Upper lobe of right lung (tissue), 1 donor: ENCODE measurements at regions of chr1 and their contacts with region 1.

Region 1: GRCh38 chr1:31669786-31670592 is 25.3 kb upstream of the PEF1 start:
- DNase-seq: peak; percentile 91
- ATAC-seq: peak; percentile 63
- H3K4me3 ChIP-seq: peak overlapping the region; percentile 16
- H3K27ac ChIP-seq: peak overlapping the region; percentile 47
- H3K4me1 ChIP-seq: peaks cover 11% of the 10 kb centered on the region
- H3K27me3 ChIP-seq: no peaks in the 10 kb centered on the region
- CTCF ChIP-seq: no peak

Region 2: GRCh38 chr1:31771891-31772668 is 102.1 kb after region 1 on chr1:
- intact Hi-C with region 1: no loop called
- DNase-seq: no peak
- ATAC-seq: peak; percentile 6
- H3K4me3 ChIP-seq: peak overlapping the region; percentile 8
- H3K27ac ChIP-seq: no peak overlapping the region
- H3K4me1 ChIP-seq: peaks cover 11% of the 10 kb centered on the region
- H3K27me3 ChIP-seq: peaks cover 53% of the 10 kb centered on the region
- CTCF ChIP-seq: no peak

Region 3: DNA sequence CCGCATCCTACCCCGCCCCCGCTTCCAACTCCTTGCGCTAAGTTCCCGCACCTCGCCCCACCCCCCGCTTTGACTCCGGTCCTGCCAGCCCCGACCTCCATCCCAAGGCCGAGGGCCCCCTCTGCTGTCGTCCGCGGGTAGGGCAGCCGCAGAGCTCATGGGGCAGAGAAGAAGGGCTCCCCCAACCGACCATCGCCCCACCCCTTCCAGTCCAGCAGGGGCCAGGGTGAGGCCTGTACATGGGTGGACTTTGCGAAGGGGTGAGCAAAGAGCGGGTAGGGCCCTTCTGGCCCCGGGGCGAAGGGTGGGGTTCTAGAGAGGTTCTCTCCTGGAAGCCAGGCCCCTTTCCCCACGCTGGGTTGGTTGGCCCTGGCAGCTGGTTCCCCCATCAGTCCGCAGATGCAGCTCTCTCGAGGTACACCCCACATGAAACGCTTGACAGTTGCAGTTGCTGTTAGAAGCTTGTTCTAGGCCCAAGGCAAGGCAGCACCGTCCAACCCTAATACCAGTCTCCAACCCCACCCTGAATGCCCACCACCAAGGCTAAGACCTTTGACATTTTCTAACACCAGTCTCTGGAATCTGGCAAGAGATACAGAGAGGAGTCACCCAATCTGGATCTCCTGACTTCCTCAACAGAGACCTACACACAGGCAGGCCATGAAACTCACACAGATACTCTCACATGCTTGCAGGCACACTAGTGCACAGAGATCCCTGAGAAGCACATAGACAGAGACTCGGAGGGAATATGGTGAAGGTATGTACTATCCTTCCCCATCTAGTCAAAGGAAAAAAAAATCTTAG is 119.5 kb after region 1 on chr1:
- intact Hi-C with region 1: loop called (anchors 5 kb)
- DNase-seq: peak; percentile 97
- ATAC-seq: peak; percentile 92
- H3K4me3 ChIP-seq: peak overlapping the region; percentile 70
- H3K27ac ChIP-seq: no peak overlapping the region
- H3K4me1 ChIP-seq: peaks cover 3% of the 10 kb centered on the region
- H3K27me3 ChIP-seq: no peaks in the 10 kb centered on the region
- CTCF ChIP-seq: peak; percentile 77

Region 4: DNA sequence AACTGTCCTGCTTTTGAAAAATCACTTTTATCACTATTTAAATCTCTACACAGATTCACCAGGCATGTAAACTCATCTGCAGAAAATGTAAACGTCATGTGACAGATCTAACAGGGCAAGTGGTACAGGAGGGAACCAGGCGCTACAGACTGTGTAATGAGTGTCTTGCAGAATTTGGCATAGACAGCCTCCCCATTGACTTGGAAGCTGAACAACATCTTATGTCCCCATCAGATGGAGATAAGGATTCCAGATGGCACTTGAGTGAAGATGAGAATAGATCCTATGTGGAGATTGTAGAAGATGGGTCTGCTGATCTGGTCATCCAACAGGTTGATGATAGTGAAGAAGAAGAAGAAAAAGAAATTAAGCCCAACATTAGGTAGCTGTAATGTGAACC is 930.0 kb after region 1 on chr1:
- intact Hi-C with region 1: no loop called
- DNase-seq: no peak
- ATAC-seq: no peak
- H3K4me3 ChIP-seq: no peak overlapping the region
- H3K27ac ChIP-seq: no peak overlapping the region
- H3K4me1 ChIP-seq: no peaks in the 10 kb centered on the region
- H3K27me3 ChIP-seq: no peaks in the 10 kb centered on the region
- CTCF ChIP-seq: no peak